ENCODE measurements at regions of chr10 and their contacts with region 1.

Region 1: GRCh38 chr10:119725828-119726675 is at the start of gene INPP5F:
- DNase-seq: peak; percentile 96 to 98 (median 97)
- H3K4me3 ChIP-seq: peak within 1 kb of the TSS; percentile 62 to 74
- H3K4me3 Mint-ChIP-seq: peak within 1 kb of the TSS; percentile 90 to 96 (median 92)
- H3K27ac ChIP-seq: peak within 1 kb of the TSS; percentile 53
- H3K27ac Mint-ChIP-seq: peak within 1 kb of the TSS; percentile 74 to 92 (median 91)
- H3K4me1 ChIP-seq: peaks cover 34% of the 10 kb centered on the region
- H3K4me1 Mint-ChIP-seq: peaks cover 27 to 37% (median 31%) of the 10 kb centered on the region in 4 donors
- H3K27me3 ChIP-seq: no peaks in the 10 kb centered on the region
- H3K27me3 Mint-ChIP-seq: no peaks in the 10 kb centered on the region
- total RNA-seq, gene INPP5F: 10.6 to 10.9 TPM

Region 2: GRCh38 chr10:119103903-119104652 is 622.0 kb before region 1 on chr10 and contains the start of gene DENND10:
- CTCF ChIA-PET with region 1: no interaction called
- POLR2A ChIA-PET with region 1: no interaction called
- intact Hi-C with region 1: loop called (anchors 5 kb)
- DNase-seq: peak; percentile 56 to 71 (median 60)
- H3K4me3 ChIP-seq: peak within 1 kb of the TSS; percentile 52 to 59
- H3K4me3 Mint-ChIP-seq: peak within 1 kb of the TSS; percentile 79 to 88 (median 86)
- H3K27ac ChIP-seq: peak within 1 kb of the TSS; percentile 54
- H3K27ac Mint-ChIP-seq: peak within 1 kb of the TSS; percentile 72 to 95 (median 91)
- H3K4me1 ChIP-seq: peaks cover 34% of the 10 kb centered on the region
- H3K4me1 Mint-ChIP-seq: peaks cover 14 to 46% (median 34%) of the 10 kb centered on the region in 4 donors
- H3K27me3 ChIP-seq: no peaks in the 10 kb centered on the region
- H3K27me3 Mint-ChIP-seq: no peaks in the 10 kb centered on the region
- total RNA-seq, gene DENND10: 48.0 to 53.4 TPM

Region 3: DNA sequence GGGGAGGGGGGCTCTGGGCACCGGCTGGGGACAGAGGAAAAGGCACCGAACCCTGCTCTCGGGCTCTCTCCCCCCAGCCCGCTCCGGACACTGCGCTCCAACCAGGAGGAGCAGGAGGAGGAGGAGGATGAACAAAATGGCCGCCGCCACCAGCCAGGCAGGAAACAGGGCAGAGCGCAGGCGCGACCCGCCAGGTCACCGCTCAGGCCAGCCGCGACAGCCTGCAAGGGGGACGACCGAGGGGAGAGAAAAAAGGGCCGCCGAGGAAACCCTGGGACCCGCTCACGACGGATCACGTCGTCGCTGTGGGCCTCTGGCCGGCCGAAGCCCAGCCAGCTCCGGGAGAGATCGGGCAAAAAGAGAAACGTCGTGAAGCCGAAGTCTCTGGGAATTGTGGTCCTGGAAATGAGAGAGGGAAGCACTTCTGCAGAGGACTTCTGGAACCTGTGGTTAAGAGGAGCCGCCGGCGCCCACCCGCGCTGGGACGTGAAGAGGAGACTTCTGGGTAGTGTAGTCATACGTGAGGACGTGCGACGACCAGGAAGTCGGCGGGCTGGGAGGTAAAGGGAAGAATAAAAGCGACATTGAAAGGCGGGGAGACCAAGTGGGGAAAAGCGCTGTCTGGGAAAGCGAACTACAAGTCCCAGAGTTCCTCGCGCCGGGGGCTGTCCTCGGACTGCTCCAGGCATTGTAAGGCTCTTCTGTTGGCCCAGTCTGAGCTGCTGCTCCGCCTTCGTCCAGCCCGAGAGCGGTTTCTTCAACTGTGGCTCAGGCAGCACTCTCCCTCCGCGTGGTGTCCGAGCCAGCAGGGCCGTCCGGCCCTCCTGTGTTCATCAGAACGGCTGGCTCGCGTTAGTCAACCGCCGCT is 129.3 kb before region 1 on chr10 and contains the start of gene TIAL1:
- CTCF ChIA-PET with region 1: no interaction called
- POLR2A ChIA-PET with region 1: interaction called, 6 read pairs
- intact Hi-C with region 1: loop called (anchors 1 kb)
- DNase-seq: peak; percentile 89 to 97 (median 91)
- H3K4me3 ChIP-seq: peak within 1 kb of the TSS; percentile 83 to 99
- H3K4me3 Mint-ChIP-seq: peak within 1 kb of the TSS; percentile 93 to 100 (median 99)
- H3K27ac ChIP-seq: peak within 1 kb of the TSS; percentile 98
- H3K27ac Mint-ChIP-seq: peak within 1 kb of the TSS; percentile 97 to 100 (median 99)
- H3K4me1 ChIP-seq: peaks cover 43% of the 10 kb centered on the region
- H3K4me1 Mint-ChIP-seq: peaks cover 37 to 57% (median 44%) of the 10 kb centered on the region in 4 donors
- H3K27me3 ChIP-seq: no peaks in the 10 kb centered on the region
- H3K27me3 Mint-ChIP-seq: no peaks in the 10 kb centered on the region
- total RNA-seq, gene TIAL1: 201 to 212 TPM

Region 4: GRCh38 chr10:119663866-119664616 is 62.0 kb before region 1 on chr10:
- CTCF ChIA-PET with region 1: no interaction called
- POLR2A ChIA-PET with region 1: interaction called, 10 read pairs
- intact Hi-C with region 1: no loop called
- DNase-seq: peak; percentile 65 to 78 (median 70)
- H3K4me3 ChIP-seq: peak overlapping the region; percentile 31 to 48
- H3K4me3 Mint-ChIP-seq: peak overlapping the region; percentile 75 to 91 (median 84)
- H3K27ac ChIP-seq: peak overlapping the region; percentile 64
- H3K27ac Mint-ChIP-seq: peak overlapping the region; percentile 90 to 98 (median 94)
- H3K4me1 ChIP-seq: peaks cover 40% of the 10 kb centered on the region
- H3K4me1 Mint-ChIP-seq: peaks cover 33 to 90% (median 48%) of the 10 kb centered on the region in 4 donors
- H3K27me3 ChIP-seq: no peaks in the 10 kb centered on the region
- H3K27me3 Mint-ChIP-seq: no peaks in the 10 kb centered on the region

Region 5: GRCh38 chr10:119737827-119738226 is 11.8 kb after region 1 on chr10:
- CTCF ChIA-PET with region 1: interaction called, 8 read pairs
- POLR2A ChIA-PET with region 1: interaction called, 22 read pairs
- intact Hi-C with region 1: loop called (anchors 1 kb)
- DNase-seq: no peak
- H3K4me3 ChIP-seq: no peak overlapping the region
- H3K4me3 Mint-ChIP-seq: peak overlapping the region in 6 of 8 donors; percentile 7 to 53 (median 43)
- H3K27ac ChIP-seq: no peak overlapping the region
- H3K27ac Mint-ChIP-seq: peak overlapping the region in 5 of 7 donors; percentile 1 to 81 (median 64)
- H3K4me1 ChIP-seq: peaks cover 26% of the 10 kb centered on the region
- H3K4me1 Mint-ChIP-seq: peaks cover 16 to 31% (median 20%) of the 10 kb centered on the region in 4 donors
- H3K27me3 ChIP-seq: no peaks in the 10 kb centered on the region
- H3K27me3 Mint-ChIP-seq: no peaks in the 10 kb centered on the region

Measured in CD4-positive, alpha-beta memory T cell (primary cell).